BJ (cell line): ENCODE measurements at regions of chrX and their contacts with region 1.

Region 1: DNA sequence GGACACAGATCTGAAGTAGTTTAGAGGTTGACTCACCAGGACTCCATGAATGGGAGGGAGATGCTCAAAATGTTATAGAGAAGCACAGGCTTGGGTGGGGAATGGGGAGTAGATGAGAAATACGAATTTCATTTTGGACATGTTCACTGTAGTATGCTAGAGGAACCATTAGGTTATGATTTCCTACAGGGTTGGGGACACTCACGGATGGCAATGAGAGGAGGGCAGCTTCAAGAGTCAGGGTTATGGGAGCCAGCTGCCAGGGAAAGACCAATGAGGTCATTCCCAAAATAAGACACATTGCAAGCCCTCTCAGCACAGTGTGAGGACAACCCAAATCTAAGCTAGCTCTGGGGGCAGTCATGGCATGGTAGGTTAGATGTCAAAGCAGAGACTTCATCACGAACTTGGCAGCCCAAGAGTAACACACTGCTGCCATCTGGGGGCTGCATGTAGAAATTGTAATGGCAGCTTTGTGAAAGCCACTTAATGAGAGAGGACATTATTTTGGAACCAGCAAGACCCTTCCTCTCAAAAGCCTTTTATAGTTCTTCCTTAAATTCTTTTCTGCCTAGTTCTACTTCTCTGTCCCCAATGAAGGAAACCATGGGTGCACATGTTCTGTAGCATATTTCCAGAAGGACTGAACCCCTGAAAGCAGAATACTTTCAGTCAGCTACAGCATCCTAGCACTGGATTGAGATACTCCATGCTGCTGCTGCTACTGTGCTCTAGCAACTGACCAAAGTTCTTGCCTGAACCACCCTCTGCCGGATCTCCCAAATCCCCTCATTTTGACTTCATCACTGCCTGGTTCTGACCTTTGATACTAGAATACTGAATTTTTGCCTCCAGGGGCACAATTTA is 16.2 kb upstream of the ZCCHC12 start:
- DNase-seq: no peak
- H3K4me3 ChIP-seq: no peak overlapping the region
- H3K27me3 ChIP-seq: no peaks in the 10 kb centered on the region
- CTCF ChIP-seq: peak; percentile 61

Region 2: GRCh38 chrX:118627084-118627758 is 180.2 kb before region 1 on chrX:
- CTCF ChIA-PET with region 1: interaction called, 10 read pairs
- POLR2A ChIA-PET with region 1: no interaction called
- DNase-seq: no peak
- H3K4me3 ChIP-seq: no peak overlapping the region
- H3K27me3 ChIP-seq: no peaks in the 10 kb centered on the region
- CTCF ChIP-seq: peak; percentile 37; the same call in 1 of the 2 replicates

Region 3: DNA sequence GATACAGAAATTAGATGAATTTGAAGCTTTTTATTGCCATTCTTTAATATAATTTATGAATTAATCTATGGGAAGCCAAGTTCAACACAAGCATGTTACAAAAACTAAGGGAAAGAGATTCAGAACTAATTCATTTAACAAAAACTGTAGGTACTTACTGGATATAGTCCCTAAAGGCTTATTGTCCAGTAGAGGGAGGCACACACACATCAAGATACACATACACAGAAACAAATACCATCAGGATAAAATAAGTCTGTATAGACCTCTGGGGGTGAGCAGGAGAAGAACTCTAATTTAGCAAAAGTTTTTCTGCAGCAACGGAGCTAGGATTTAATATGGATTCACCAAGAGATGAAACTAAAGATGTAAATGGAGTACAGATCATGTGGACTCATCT is 163.0 kb before region 1 on chrX:
- CTCF ChIA-PET with region 1: interaction called, 23 read pairs
- POLR2A ChIA-PET with region 1: no interaction called
- DNase-seq: no peak
- H3K4me3 ChIP-seq: no peak overlapping the region
- H3K27me3 ChIP-seq: no peaks in the 10 kb centered on the region
- CTCF ChIP-seq: peak; percentile 42

Region 4: GRCh38 chrX:118675966-118676349 is 131.4 kb before region 1 on chrX:
- CTCF ChIA-PET with region 1: no interaction called
- POLR2A ChIA-PET with region 1: no interaction called
- DNase-seq: no peak
- H3K4me3 ChIP-seq: no peak overlapping the region
- H3K27me3 ChIP-seq: no peaks in the 10 kb centered on the region
- CTCF ChIP-seq: no peak

Region 5: GRCh38 chrX:118823263-118824172 is 16.1 kb after region 1 on chrX and contains the start of gene ZCCHC12:
- CTCF ChIA-PET with region 1: interaction called, 15 read pairs
- POLR2A ChIA-PET with region 1: no interaction called
- DNase-seq: no peak
- H3K4me3 ChIP-seq: peak within 1 kb of the TSS; percentile 25
- H3K27me3 ChIP-seq: peaks cover 24% of the 10 kb centered on the region
- CTCF ChIP-seq: no peak
- polyA plus RNA-seq, gene ZCCHC12: not detected in 2 replicates